ENCODE measurements at regions of chr12 and their contacts with region 1.

Region 1: DNA sequence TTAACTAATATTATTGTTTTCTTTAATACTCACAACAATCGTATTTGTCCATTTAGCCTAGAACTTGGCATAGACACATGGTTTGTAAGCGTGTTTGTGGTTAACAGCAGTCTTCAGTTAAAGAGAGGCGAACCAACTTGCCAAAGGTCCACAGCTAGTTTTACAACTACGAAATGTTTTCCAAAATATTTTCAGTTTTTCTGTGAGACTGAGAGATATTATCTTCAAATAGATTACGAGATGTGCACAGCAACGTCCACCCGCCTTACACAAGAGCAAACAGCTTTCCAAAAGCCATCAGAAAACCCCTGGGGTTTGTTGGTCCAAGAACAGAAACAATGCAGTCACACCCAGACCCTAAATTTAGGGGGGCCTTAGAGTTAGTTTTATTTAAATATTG is 58.6 kb upstream of the RASSF3 start:
- DNase-seq: no peak
- H3K4me3 ChIP-seq: no peak overlapping the region
- H3K4me3 Mint-ChIP-seq: no peak overlapping the region
- H3K27ac ChIP-seq: no peak overlapping the region
- H3K27ac Mint-ChIP-seq: no peak overlapping the region
- H3K4me1 ChIP-seq: peaks cover 8% of the 10 kb centered on the region
- H3K4me1 Mint-ChIP-seq: peaks cover 5 to 9% (median 6%) of the 10 kb centered on the region in 4 donors
- H3K27me3 ChIP-seq: no peaks in the 10 kb centered on the region
- H3K27me3 Mint-ChIP-seq: no peaks in the 10 kb centered on the region

Region 2: GRCh38 chr12:64452559-64453329 is 99.0 kb before region 1 on chr12:
- CTCF ChIA-PET with region 1: no interaction called
- POLR2A ChIA-PET with region 1: no interaction called
- intact Hi-C with region 1: no loop called
- DNase-seq: peak in 4 of 5 donors; percentile 12 to 39 (median 28)
- H3K4me3 ChIP-seq: peak overlapping the region; percentile 87 to 97
- H3K4me3 Mint-ChIP-seq: peak overlapping the region; percentile 91 to 98 (median 94)
- H3K27ac ChIP-seq: peak overlapping the region; percentile 92
- H3K27ac Mint-ChIP-seq: peak overlapping the region; percentile 88 to 99 (median 94)
- H3K4me1 ChIP-seq: peaks cover 57% of the 10 kb centered on the region
- H3K4me1 Mint-ChIP-seq: peaks cover 42 to 63% (median 51%) of the 10 kb centered on the region in 4 donors
- H3K27me3 ChIP-seq: no peaks in the 10 kb centered on the region
- H3K27me3 Mint-ChIP-seq: no peaks in the 10 kb centered on the region

Region 3: DNA sequence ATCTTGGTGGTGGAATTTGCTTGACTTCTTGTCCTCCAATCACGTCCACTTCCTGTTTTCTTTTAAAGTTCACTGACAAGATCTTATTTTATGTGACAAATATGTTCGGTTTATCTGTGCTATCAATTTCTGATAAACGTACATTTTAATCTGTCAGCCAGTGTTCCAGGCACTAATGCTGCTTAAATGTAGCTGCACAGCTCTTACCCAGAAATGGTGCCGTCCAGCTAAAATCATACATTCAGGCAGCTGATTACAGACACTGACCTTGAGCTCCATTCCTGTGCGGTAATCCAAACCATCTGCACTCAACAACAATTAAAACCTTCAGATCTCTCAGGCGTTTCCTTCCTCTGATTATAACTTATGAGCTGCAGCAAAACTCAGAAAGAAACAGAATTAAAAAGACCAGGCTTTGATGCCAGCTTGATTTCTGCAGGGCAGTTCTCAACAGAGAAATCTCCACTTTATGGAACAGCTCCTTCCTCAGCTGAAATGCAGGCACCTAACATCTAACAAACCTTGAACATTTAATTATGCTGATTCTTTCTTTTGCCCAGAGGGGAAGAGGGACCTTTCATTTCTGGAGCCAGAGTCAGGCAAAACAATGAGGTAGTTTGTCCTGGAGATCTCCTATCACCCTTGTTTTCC is 32.2 kb after region 1 on chr12:
- CTCF ChIA-PET with region 1: interaction called, 14 read pairs
- POLR2A ChIA-PET with region 1: no interaction called
- intact Hi-C with region 1: no loop called
- DNase-seq: peak in 4 of 5 donors; percentile 19 to 27 (median 24)
- H3K4me3 ChIP-seq: peak overlapping the region; percentile 36 to 55
- H3K4me3 Mint-ChIP-seq: peak overlapping the region; percentile 40 to 79 (median 74)
- H3K27ac ChIP-seq: peak overlapping the region; percentile 0
- H3K27ac Mint-ChIP-seq: peak overlapping the region; percentile 38 to 89 (median 75)
- H3K4me1 ChIP-seq: peaks cover 35% of the 10 kb centered on the region
- H3K4me1 Mint-ChIP-seq: peaks cover 21 to 40% (median 29%) of the 10 kb centered on the region in 4 donors
- H3K27me3 ChIP-seq: no peaks in the 10 kb centered on the region
- H3K27me3 Mint-ChIP-seq: no peaks in the 10 kb centered on the region

Region 4: GRCh38 chr12:64679487-64679983 is 127.8 kb after region 1 on chr12:
- CTCF ChIA-PET with region 1: interaction called, 36 read pairs
- POLR2A ChIA-PET with region 1: no interaction called
- intact Hi-C with region 1: no loop called
- DNase-seq: peak; percentile 73 to 86 (median 80)
- H3K4me3 ChIP-seq: peak overlapping the region in 1 of 2 donors; percentile 36
- H3K4me3 Mint-ChIP-seq: peak overlapping the region; percentile 76 to 85 (median 79)
- H3K27ac ChIP-seq: peak overlapping the region; percentile 75
- H3K27ac Mint-ChIP-seq: peak overlapping the region; percentile 94 to 98 (median 97)
- H3K4me1 ChIP-seq: peaks cover 99% of the 10 kb centered on the region
- H3K4me1 Mint-ChIP-seq: peaks cover 67 to 100% (median 86%) of the 10 kb centered on the region in 4 donors
- H3K27me3 ChIP-seq: no peaks in the 10 kb centered on the region
- H3K27me3 Mint-ChIP-seq: no peaks in the 10 kb centered on the region

Region 5: GRCh38 chr12:64801381-64801780 is 249.7 kb after region 1 on chr12:
- CTCF ChIA-PET with region 1: interaction called, 15 read pairs
- POLR2A ChIA-PET with region 1: no interaction called
- intact Hi-C with region 1: loop called (anchors 1 kb)
- DNase-seq: no peak
- H3K4me3 ChIP-seq: no peak overlapping the region
- H3K4me3 Mint-ChIP-seq: no peak overlapping the region
- H3K27ac ChIP-seq: no peak overlapping the region
- H3K27ac Mint-ChIP-seq: no peak overlapping the region
- H3K4me1 ChIP-seq: peaks cover 3% of the 10 kb centered on the region
- H3K4me1 Mint-ChIP-seq: peaks cover 0 to 4% (median 1%) of the 10 kb centered on the region in 4 donors
- H3K27me3 ChIP-seq: no peaks in the 10 kb centered on the region
- H3K27me3 Mint-ChIP-seq: peaks cover 23 to 29% of the 10 kb centered on the region in 2 donors